ENCODE measurements at regions of chr3 and their contacts with region 1.

Region 1: GRCh38 chr3:13648060-13649001 is 99.4 kb downstream of the FBLN2 start:
- DNase-seq: peak; percentile 79 to 82
- H3K4me3 ChIP-seq: no peak overlapping the region
- H3K27ac ChIP-seq: no peak overlapping the region
- H3K4me1 ChIP-seq: peaks cover 0 to 7% of the 10 kb centered on the region in 2 donors
- H3K27me3 ChIP-seq: no peaks in the 10 kb centered on the region
- CTCF ChIP-seq: peak; percentile 86 to 99 (median 92)
- POLR2A ChIP-seq: no peak

Region 2: DNA sequence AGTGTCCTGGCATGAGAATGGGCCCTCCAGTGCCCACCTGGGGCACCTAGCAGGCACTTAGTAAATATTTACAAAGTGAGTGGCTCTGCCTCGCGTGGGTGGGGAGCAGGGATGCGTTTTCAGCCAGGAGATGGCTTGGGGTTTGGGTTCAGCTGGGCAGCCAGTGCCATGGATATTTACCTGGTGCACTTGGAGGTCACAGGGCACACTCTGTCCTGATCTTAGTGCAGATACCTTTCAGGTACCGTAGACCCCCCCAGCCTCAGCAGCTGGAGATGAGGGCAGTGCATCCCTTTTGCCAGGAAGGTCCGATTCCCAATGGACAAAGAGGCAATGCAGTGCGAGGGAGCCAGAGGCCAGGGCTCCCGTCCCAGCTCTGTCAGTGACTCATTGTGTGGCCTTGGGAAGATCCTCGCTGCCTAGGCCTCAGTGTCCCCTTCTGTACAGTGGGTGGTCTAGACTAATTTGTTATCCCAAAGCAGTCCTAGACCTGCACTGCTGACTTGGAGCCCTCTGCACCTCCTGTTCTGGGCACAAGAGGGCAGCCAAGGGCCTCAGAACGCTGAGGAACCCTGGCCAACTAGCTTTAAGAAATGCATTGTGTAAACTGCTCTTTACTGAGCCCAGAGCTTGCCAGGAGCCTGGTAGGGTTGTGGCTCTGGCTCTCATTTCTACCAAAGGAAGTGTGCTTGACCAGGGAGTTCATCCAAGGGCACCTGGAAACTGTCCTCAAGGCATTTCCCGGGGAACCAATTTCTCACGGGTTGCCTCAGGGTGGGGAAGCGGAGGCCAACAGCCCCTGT is 152.2 kb before region 1 on chr3:
- intact Hi-C with region 1: loop called (anchors 2 kb)
- DNase-seq: peak; percentile 81 to 84
- H3K4me3 ChIP-seq: no peak overlapping the region
- H3K27ac ChIP-seq: peak overlapping the region in 2 of 3 donors; percentile 60 to 61
- H3K4me1 ChIP-seq: peaks cover 4 to 10% of the 10 kb centered on the region in 2 donors
- H3K27me3 ChIP-seq: no peaks in the 10 kb centered on the region
- CTCF ChIP-seq: peak; percentile 83 to 95 (median 90)
- POLR2A ChIP-seq: no peak

Region 3: GRCh38 chr3:13559764-13560525 is 88.4 kb before region 1 on chr3:
- intact Hi-C with region 1: no loop called
- DNase-seq: no peak
- H3K4me3 ChIP-seq: no peak overlapping the region
- H3K27ac ChIP-seq: no peak overlapping the region
- H3K4me1 ChIP-seq: peaks cover 0 to 4% of the 10 kb centered on the region in 2 donors
- H3K27me3 ChIP-seq: no peaks in the 10 kb centered on the region
- CTCF ChIP-seq: no peak
- POLR2A ChIP-seq: no peak